SK-N-SH (cell line): ENCODE measurements at regions of chr12 and their contacts with region 1.

Region 1: DNA sequence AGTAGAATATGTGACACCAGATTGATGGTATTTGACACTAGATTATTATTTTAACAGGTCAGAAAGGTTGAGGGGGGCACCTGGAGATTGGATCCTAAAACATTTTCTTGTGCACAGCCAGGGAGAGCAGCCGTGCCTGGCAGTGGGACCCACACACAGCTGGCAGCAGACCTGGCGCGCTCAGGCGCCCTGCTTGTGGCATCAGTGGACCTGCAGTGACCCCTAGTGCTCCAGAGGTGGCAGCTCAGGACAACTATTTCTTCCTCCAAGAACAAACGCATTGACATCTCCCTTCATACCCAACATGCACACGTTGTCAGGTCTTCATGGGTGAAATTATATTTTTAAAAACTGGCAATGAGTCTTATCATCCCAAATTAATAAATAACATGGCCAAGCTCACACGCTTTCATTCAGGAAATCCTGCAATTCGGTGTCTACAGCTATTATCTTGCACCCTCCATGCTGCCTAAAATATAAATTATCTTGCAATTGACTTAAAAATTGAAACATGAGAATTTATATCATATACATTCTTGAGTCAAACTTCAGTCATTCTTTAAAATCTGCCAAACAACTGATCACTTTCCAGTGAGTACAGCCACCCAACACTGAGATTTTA is 7.7 kb upstream of the TMEM132D start:
- DNase-seq: peak; percentile 80
- H3K4me3 ChIP-seq: no peak overlapping the region
- H3K27ac ChIP-seq: no peak overlapping the region
- H3K4me1 ChIP-seq: no peaks in the 10 kb centered on the region
- H3K27me3 ChIP-seq: no peaks in the 10 kb centered on the region
- CTCF ChIP-seq: peak; percentile 29; the same call in 1 of the 2 replicates
- EP300 ChIP-seq: no peak
- RAD21 ChIP-seq: peak; percentile 96

Region 2: GRCh38 chr12:128783129-128783574 is 1128.4 kb before region 1 on chr12:
- CTCF ChIA-PET with region 1: interaction called, 33 read pairs
- POLR2A ChIA-PET with region 1: no interaction called
- DNase-seq: no peak
- H3K4me3 ChIP-seq: no peak overlapping the region
- H3K27ac ChIP-seq: no peak overlapping the region
- H3K4me1 ChIP-seq: no peaks in the 10 kb centered on the region
- H3K27me3 ChIP-seq: no peaks in the 10 kb centered on the region
- CTCF ChIP-seq: no peak
- EP300 ChIP-seq: no peak
- RAD21 ChIP-seq: no peak

Region 3: GRCh38 chr12:128969480-128970055 is 942.0 kb before region 1 on chr12:
- CTCF ChIA-PET with region 1: interaction called, 21 read pairs
- POLR2A ChIA-PET with region 1: no interaction called
- DNase-seq: peak; percentile 78
- H3K4me3 ChIP-seq: no peak overlapping the region
- H3K27ac ChIP-seq: no peak overlapping the region
- H3K4me1 ChIP-seq: peaks cover 0 to 7% of the 10 kb centered on the region in 2 experiments; a peak in 1 of 4 replicates
- H3K27me3 ChIP-seq: no peaks in the 10 kb centered on the region
- CTCF ChIP-seq: no peak
- EP300 ChIP-seq: no peak
- RAD21 ChIP-seq: peak; percentile 69

Region 4: DNA sequence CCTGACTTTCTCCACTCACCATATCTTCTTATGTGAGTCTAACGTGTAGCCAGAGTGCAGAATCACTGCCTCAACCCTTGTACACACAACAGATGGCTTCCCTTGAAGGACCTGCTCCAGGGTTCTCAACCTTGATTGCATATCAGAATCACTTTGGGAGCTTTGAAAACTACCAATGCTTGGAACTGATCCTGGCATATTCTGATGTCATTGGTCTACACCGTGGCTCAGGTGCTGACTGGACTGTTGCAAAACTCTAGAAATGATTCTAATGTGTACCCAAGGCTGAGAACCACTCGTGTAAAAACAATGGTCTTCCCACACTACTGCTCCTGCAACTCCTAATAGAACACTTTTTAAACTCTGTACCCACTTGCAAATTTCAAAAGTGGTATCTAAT is 26.3 kb before region 1 on chr12:
- CTCF ChIA-PET with region 1: no interaction called
- POLR2A ChIA-PET with region 1: no interaction called
- DNase-seq: no peak
- H3K4me3 ChIP-seq: no peak overlapping the region
- H3K27ac ChIP-seq: no peak overlapping the region
- H3K4me1 ChIP-seq: no peaks in the 10 kb centered on the region
- H3K27me3 ChIP-seq: no peaks in the 10 kb centered on the region
- CTCF ChIP-seq: no peak
- EP300 ChIP-seq: no peak
- RAD21 ChIP-seq: no peak

Region 5: DNA sequence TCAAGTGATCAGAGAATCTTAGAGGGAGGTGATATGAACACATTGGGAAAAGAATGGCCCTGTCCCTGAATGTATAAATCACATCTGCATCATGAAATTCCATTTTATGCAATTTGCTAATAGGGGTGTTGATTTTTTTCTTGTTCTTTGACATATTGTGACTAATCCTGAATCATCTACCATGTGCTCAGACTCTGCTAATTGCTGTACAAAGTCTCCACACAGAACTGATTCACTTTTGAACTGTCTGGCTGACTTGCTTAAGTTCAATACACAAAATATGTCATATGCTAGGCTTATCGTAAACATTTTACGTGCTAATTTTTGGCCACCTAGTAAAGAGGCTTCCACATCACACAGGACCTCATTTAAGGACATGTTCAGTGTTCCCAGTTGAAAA is 10.3 kb before region 1 on chr12:
- CTCF ChIA-PET with region 1: interaction called, 18 read pairs
- POLR2A ChIA-PET with region 1: no interaction called
- DNase-seq: no peak
- H3K4me3 ChIP-seq: no peak overlapping the region
- H3K27ac ChIP-seq: no peak overlapping the region
- H3K4me1 ChIP-seq: no peaks in the 10 kb centered on the region
- H3K27me3 ChIP-seq: no peaks in the 10 kb centered on the region
- CTCF ChIP-seq: no peak
- EP300 ChIP-seq: no peak
- RAD21 ChIP-seq: no peak